Left cardiac atrium (tissue), 4 donors: ENCODE measurements at regions of chr11 and their contacts with region 1.

Region 1: DNA sequence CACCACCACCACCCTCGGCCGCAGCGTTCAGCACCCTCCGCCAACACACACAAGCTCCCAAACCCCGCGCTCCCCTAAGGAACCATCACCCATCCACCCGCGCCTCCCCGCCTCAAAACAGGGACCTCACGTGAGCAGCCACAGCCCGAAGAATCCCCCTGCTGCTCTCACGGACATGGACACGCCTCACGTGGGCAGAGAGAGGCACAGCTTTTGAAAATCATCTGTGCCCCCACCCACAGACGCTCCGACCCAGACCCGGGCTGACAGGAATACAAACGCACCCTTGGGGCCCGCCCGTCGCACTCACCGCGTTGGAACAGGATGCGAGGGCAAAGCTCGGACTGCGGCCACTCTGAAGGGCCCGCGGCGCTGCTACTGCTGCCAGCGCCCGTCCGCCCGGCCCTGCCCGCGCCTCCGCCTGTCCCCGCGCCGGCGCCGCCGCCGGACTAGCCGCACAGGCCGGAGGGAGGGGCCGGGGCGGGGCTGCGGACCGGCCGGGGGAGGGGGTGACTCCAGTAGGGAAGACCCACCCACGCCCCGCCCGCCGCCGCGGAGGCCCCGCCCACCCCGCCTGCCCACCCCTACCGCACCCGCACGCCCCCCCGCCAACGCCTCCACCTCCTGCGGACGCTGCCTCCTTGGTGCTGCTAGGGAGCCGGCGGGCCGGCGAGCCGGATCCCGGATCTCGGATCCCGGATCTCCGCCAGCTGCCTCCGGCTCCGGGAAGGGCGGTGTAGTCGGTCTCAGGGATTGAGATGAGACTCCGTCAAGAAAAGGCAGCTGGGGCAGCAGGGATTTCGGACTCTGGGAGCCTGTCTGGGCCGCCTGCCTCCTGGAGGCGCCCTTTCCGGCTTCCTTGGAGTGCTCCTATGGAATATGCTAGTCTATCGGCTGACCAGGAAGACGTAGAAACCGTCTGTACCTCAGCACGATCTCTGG is at the start of gene TRIM3:
- DNase-seq: peak; percentile 95
- ATAC-seq: peak; percentile 91 to 92
- total RNA-seq, gene TRIM3: 10.6 to 14.5 TPM

Region 2: DNA sequence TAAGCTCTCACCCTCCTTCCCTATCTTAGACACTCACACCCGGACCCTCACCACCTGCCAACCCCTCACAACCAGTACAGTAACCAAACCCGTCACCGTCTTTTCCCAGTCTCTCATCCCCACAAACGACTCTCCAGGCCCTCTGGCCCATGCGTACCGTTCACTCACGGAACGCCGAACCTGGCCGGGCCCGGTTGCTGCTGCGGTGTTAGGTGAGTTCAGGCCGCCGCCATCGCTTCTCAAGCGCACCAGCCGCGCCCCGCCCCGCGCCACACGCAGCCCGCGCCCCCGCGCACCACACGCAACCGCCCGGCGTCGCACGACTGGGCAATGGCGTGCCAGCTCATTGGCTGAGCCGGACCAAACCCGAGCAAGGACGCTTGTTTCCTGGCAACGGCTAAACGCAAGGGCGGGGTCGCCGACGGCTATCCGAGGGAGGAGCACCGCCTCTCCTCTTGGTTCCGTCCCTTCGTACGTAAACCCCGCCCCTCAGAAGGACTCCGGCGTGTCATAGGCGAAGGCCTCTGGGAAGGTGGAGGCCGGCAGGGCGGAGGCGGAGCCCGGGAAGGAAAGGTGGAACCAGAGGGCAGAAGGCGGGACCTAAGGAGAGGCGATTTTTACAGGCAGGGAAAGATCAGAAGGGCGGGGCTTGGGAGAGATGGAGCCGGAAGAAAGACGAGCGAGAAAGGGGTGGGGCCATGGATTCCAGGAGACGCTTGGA is 239.2 kb before region 1 on chr11 and contains the start of gene FHIP1B:
- intact Hi-C with region 1: loop called in 1 of 2 experiments (anchors 10 kb)
- DNase-seq: peak; percentile 100
- ATAC-seq: peak; percentile 97 to 98
- total RNA-seq, gene FHIP1B: 16.0 to 16.6 TPM

Region 3: DNA sequence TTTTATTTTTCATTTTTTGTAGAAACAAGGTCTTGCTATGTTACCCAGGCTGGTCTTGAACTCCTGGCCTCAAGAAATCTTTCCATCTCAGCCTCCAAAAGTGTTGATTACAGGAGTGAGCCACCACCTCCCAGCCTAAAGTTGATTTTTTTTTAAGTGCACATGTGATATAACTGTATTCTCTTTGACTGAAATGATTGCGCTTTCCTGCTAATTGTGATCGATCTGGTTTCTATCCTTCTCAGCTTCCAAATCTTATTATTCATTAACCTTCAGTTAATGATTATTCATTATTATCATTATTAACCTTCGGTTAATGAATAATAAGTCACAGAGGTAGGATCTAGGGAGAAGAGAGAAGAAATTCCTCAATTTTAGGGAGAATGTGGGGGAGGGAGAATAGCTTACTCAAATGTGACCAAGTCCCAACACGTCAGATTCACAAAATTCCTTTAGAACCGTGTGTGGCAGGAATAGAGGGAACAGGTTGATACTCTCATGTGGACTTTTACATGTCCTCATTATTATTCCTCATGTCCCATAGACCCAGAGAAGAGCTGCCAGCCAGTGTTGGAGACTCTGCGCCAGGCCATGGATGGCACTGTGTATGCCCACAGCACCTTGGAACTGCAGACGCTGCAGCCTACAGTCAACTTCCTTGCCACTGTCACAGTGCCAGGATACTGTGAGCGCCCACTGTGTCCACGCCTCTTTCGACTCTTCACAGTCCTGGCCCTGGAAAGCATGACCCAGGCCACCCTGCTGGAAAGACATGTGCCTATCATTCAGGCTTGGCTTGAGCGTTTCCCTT is 82.6 kb after region 1 on chr11:
- intact Hi-C with region 1: no loop called
- DNase-seq: no peak
- ATAC-seq: no peak

Region 4: DNA sequence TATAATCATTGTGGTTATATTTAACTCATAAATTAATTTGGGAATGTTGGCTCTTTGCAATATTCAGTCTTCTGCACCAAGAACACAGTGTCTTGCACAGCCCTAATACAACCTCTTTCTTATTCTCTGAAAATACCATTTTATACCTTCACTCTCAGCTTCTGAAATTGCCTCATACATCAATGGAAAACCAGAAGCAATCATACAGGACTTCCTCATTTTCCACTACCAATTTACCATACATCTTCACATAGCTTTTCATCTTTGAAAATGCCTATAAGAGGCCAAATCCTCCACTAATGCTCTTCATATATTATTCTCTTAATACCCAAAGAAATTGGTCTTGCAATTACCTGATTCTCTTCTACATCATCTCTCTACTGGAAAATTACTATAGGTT is 304.8 kb after region 1 on chr11:
- intact Hi-C with region 1: no loop called
- DNase-seq: no peak
- ATAC-seq: no peak